ENCODE measurements at regions of chr20 and their contacts with region 1.

Region 1: GRCh38 chr20:32779500-32780211 is 17.5 kb downstream of the DNMT3B start:
- DNase-seq: no peak
- ATAC-seq: peak; percentile 24
- H3K4me3 ChIP-seq: no peak overlapping the region
- H3K27ac ChIP-seq: no peak overlapping the region
- H3K4me1 ChIP-seq: no peaks in the 10 kb centered on the region
- H3K27me3 ChIP-seq: no peaks in the 10 kb centered on the region

Region 2: DNA sequence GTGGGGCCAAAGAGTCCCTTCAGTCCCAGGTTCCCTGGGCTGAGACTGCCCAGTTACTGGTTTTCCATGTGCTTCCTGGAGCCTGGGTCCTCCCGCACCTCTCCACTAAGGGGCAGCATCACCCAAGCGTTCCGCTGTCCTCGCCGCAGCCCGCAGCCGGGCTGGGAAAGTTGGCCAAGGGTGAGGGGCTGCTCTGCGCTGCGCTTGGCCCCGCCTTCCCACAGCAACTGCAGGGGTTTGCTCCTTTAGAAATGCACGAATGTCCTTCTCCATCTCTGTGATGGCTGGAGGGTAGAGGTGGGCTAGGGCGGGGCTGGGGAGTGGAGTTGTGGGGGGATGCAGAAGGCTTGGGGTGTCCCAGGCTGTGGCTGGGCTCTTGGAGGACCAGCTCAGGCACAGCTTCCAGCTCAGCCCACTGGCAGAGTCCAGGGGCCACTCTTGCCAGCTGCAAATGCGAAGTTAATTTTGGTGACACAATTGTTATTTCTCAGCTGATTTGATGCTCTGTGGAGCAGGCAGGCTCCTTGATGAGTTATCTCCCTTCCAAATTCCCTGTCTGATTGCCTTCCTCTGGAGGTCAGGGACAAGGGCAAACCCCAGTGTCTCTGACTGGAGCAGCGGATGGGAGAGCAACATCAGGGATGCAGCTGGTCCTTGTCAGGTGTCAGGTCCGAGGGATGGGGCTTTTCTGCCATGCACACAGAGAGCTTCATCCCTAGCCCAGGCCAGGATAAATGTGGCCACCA is 257.7 kb before region 1 on chr20:
- intact Hi-C with region 1: loop called (anchors 5 to 10 kb)
- DNase-seq: peak; percentile 75 to 87
- ATAC-seq: peak; percentile 77
- H3K4me3 ChIP-seq: no peak overlapping the region
- H3K27ac ChIP-seq: no peak overlapping the region
- H3K4me1 ChIP-seq: no peaks in the 10 kb centered on the region
- H3K27me3 ChIP-seq: no peaks in the 10 kb centered on the region

Region 3: DNA sequence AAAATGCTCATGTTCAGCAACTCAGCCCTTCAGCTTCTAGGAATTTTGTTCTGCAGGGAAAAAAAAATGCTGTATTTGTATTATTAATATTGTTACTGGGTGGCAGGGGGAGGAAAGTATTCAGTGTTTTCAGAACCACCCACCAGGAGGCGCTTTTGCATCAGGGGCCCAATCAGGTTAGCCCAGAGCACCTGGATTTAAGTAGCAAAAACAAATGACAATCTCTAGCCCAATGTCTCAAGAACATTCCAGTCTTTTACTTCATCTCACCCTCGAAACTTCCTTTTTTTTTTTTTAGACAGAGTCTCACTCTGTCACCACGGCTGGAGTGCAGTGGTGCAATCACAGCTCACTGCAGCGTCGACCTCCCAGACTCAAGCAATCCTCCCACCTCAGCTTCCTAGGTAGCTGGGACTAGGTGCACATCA is 105.3 kb before region 1 on chr20:
- intact Hi-C with region 1: loop called (anchors 1 to 10 kb)
- DNase-seq: no peak
- ATAC-seq: no peak
- H3K4me3 ChIP-seq: no peak overlapping the region
- H3K27ac ChIP-seq: no peak overlapping the region
- H3K4me1 ChIP-seq: no peaks in the 10 kb centered on the region
- H3K27me3 ChIP-seq: no peaks in the 10 kb centered on the region